ENCODE measurements at regions of chr3 and their contacts with region 1.

Region 1: GRCh38 chr3:113514265-113514769 is 639 bp downstream of the SPICE1 start:
- DNase-seq: no peak
- H3K4me3 ChIP-seq: peak overlapping the region; percentile 77
- H3K27ac ChIP-seq: peak overlapping the region; percentile 75
- H3K4me1 ChIP-seq: peaks cover 3% of the 10 kb centered on the region
- H3K27me3 ChIP-seq: no peaks in the 10 kb centered on the region
- CTCF ChIP-seq: no peak

Region 2: GRCh38 chr3:113660896-113661295 is 146.6 kb after region 1 on chr3:
- CTCF ChIA-PET with region 1: no interaction called
- POLR2A ChIA-PET with region 1: interaction called, 10 read pairs
- intact Hi-C with region 1: no loop called
- DNase-seq: no peak
- H3K4me3 ChIP-seq: no peak overlapping the region
- H3K27ac ChIP-seq: no peak overlapping the region
- H3K4me1 ChIP-seq: no peaks in the 10 kb centered on the region
- H3K27me3 ChIP-seq: no peaks in the 10 kb centered on the region
- CTCF ChIP-seq: no peak

Region 3: DNA sequence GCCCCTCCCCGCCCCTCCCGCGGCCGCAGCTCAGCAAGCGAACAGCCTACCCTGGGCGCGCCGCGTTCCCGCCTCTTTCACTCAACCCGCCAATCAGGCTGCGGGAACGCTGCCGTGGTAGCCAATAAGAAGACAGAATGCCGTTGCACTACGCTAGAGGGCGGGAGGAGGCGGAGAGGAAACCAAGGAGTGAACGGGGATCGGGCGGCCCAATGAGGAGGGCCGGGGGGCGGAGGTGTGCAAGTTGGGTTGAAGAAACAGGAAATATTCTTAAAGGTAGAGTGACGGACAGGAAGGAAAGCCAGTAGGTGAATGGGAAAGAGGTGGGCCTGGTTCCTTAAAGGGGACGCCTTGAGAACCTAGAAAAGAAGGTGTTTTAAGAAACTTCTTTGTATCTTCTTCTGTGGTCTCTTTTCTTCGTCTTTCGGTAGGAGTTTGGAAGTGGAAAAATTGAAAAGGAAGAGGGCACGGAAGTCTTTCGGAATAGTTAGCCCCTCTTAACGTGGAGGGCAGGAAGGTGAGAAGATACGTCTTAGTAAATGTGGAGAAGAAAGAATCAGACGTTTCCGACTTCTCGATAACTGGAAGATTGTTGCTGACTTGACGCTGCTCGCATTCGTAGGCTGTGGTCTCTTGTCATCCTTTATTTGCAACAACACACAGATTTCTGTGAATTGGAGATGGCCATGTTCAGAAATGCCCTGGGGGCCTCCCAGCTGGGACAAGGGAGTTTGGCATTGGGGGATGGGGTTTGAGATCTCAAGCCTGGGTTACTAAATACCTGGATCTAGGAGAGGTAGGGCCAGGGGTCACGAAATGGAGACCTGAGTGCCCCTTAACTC is 182.6 kb after region 1 on chr3:
- CTCF ChIA-PET with region 1: no interaction called
- POLR2A ChIA-PET with region 1: no interaction called
- intact Hi-C with region 1: loop called (anchors 10 kb)
- DNase-seq: peak; percentile 100
- H3K4me3 ChIP-seq: peak overlapping the region; percentile 63
- H3K27ac ChIP-seq: peak overlapping the region; percentile 75
- H3K4me1 ChIP-seq: peaks cover 12% of the 10 kb centered on the region
- H3K27me3 ChIP-seq: no peaks in the 10 kb centered on the region
- CTCF ChIP-seq: no peak

Measured in A673 (cell line).